HCT116 (cell line): ENCODE measurements at regions of chr2 and their contacts with region 1.

Region 1: DNA sequence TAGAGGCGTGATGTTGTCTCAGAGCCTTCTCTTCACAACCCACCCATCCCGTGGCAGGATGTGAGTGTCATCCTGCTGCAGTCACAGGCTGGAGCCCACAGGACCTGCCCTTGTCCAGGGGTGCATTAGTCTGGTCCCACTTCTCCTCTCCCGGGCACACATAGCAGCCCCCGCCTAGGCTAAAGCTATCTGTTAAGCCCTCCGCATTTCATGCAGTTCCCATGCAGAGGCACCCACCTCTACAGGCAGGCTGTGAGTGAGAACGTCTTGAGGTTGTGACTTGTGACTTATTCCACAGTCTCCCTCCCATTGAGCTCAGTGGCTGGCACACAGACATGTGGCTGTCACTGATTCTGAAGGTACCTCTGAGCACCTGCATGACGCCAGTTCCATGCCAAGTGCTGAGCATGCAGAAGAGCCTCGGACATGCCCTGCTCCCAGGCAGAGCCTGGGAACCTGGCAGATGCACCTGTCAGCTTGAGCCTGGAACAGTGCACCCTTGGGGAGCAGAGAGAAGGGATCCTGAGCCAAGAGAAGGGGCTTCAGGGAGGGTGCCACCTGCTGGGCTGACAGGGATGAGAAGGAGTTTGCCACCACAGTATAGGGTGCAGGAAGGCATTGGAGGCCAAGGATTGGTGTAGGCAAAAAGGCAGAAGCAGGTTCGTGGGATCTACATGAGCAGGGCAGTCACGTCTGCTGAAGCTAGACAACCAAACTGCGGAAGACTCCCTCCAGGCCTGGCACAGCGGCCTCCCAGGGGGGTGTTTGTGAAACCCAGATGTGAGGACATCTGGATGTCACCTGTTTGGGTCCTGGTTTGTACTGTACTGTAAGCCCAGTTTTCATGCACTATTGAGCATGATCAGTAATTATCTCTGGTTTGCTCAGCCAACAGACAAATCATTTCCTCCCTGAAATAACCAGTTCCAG is 213.6 kb downstream of the GLI2 start:
- DNase-seq: no peak
- ATAC-seq: peak; percentile 87
- H3K4me3 ChIP-seq: no peak overlapping the region
- H3K27ac ChIP-seq: no peak overlapping the region
- H3K4me1 ChIP-seq: no peaks in the 10 kb centered on the region
- H3K27me3 ChIP-seq: no peaks in the 10 kb centered on the region
- CTCF ChIP-seq: peak; percentile 52 to 67 (median 63); a peak in 5 of 6 replicates
- POLR2A ChIP-seq: no peak
- RAD21 ChIP-seq: peak; percentile 67

Region 2: DNA sequence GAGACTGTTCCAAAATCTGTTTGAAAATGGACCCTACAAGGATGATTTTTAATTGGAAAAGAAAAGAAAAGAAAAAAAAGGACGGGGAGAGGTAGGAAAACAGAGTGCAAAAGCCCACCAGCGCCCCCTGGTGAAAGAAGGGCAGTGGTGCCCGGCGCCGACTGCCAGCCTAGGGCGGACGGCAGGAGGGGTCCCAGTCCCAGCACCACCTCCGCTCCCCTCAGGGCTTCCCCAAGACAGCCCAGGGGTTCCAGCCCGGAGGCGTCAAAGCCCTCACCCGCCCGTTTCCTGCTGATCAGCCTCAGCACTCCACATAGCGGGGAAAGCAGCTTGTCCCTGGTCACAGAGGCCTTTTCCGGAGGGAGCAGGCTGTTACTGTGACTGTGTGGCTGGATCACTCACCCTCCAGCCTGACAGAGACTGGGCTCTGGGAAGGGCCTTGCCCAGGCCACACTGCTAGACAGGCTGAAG is 121.8 kb after region 1 on chr2:
- CTCF ChIA-PET with region 1: no interaction called
- POLR2A ChIA-PET with region 1: no interaction called
- RAD21 ChIA-PET with region 1: no interaction called
- intact Hi-C with region 1: loop called (anchors 2 kb)
- DNase-seq: peak; percentile 19
- ATAC-seq: peak; percentile 64
- H3K4me3 ChIP-seq: no peak overlapping the region
- H3K27ac ChIP-seq: no peak overlapping the region
- H3K4me1 ChIP-seq: peaks cover 5 to 30% of the 10 kb centered on the region in 2 experiments; a peak in 3 of 4 replicates
- H3K27me3 ChIP-seq: no peaks in the 10 kb centered on the region
- CTCF ChIP-seq: peak; percentile 92 to 96 (median 94)
- POLR2A ChIP-seq: no peak
- RAD21 ChIP-seq: peak; percentile 96